Activated CD4-positive, alpha-beta T cell treated with anti-CD3 and anti-CD28 coated beads for 36 hours (primary cell): ENCODE measurements at regions of chr10 and their contacts with region 1.

Region 1: GRCh38 chr10:100391163-100392002 is 44.4 kb downstream of the SCD start:
- DNase-seq: peak; percentile 25
- ATAC-seq: peak; percentile 80
- H3K4me3 Mint-ChIP-seq: no peak overlapping the region
- H3K27ac Mint-ChIP-seq: no peak overlapping the region
- H3K4me1 Mint-ChIP-seq: peaks cover 10% of the 10 kb centered on the region
- H3K27me3 Mint-ChIP-seq: no peaks in the 10 kb centered on the region

Region 2: DNA sequence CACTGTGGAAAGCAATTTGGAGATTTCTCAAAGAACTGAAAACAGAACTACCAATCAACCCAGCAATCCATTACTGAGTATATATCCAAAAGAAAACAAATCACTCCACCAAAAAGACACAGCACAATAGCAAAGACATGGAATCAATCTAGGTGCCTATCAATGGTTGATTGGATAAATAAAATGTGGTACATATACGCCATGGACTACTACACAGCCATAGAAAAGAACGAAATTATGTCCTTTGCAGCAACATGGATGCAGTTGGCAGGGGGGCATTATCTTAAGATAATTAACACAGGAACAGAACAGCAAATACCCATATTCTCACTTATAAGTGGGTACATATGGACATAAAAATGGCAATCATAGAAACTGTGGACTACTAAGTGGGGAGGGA is 36.0 kb after region 1 on chr10:
- CTCF ChIA-PET with region 1: interaction called, 3 read pairs
- POLR2A ChIA-PET with region 1: no interaction called
- intact Hi-C with region 1: loop called in 1 of 2 experiments (anchors 5 kb)
- DNase-seq: no peak
- ATAC-seq: no peak
- H3K4me3 Mint-ChIP-seq: no peak overlapping the region
- H3K27ac Mint-ChIP-seq: no peak overlapping the region
- H3K4me1 Mint-ChIP-seq: no peaks in the 10 kb centered on the region
- H3K27me3 Mint-ChIP-seq: peaks cover 2% of the 10 kb centered on the region

Region 3: GRCh38 chr10:100847440-100847839 is 456.1 kb after region 1 on chr10:
- CTCF ChIA-PET with region 1: no interaction called
- POLR2A ChIA-PET with region 1: no interaction called
- intact Hi-C with region 1: no loop called
- DNase-seq: peak; percentile 90
- ATAC-seq: peak; percentile 94
- H3K4me3 Mint-ChIP-seq: no peak overlapping the region
- H3K27ac Mint-ChIP-seq: peak overlapping the region; percentile 85
- H3K4me1 Mint-ChIP-seq: peaks cover 31% of the 10 kb centered on the region
- H3K27me3 Mint-ChIP-seq: peaks cover 46% of the 10 kb centered on the region